ENCODE measurements at regions of chr9 and their contacts with region 1.

Region 1: GRCh38 chr9:76704593-76705204 is 59.5 kb upstream of the PCA3 start:
- DNase-seq: peak in 4 of 5 donors; percentile 46 to 56 (median 50)
- H3K4me3 ChIP-seq: no peak overlapping the region
- H3K4me3 Mint-ChIP-seq: no peak overlapping the region
- H3K27ac ChIP-seq: no peak overlapping the region
- H3K27ac Mint-ChIP-seq: no peak overlapping the region
- H3K4me1 ChIP-seq: no peaks in the 10 kb centered on the region
- H3K4me1 Mint-ChIP-seq: peaks cover 0 to 6% (median 3%) of the 10 kb centered on the region in 4 donors
- H3K27me3 ChIP-seq: no peaks in the 10 kb centered on the region
- H3K27me3 Mint-ChIP-seq: peaks cover 10 to 29% of the 10 kb centered on the region in 2 donors

Region 2: DNA sequence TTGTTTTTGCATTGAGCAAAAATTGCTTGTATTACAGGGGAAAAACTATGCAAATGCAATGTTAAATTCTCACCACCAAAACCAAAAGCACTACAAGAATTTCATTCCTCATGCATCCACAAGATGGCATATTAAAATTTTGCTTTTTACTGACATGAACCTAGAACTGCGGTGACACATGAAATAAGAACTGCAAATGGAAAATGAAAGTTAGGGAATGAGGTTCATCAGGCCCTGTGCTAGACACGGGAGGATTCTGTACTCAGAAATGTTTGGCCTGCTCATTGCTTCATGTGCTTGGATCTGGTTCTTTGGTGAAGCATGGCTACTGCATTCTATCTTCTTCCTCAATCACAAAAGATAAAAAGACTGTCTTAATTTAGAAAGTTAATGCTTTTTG is 301.3 kb before region 1 on chr9:
- CTCF ChIA-PET with region 1: interaction called, 19 read pairs
- POLR2A ChIA-PET with region 1: no interaction called
- intact Hi-C with region 1: loop called (anchors 1 kb)
- DNase-seq: peak; percentile 43 to 67 (median 60)
- H3K4me3 ChIP-seq: no peak overlapping the region
- H3K4me3 Mint-ChIP-seq: peak overlapping the region; percentile 37 to 79 (median 76)
- H3K27ac ChIP-seq: peak overlapping the region; percentile 33
- H3K27ac Mint-ChIP-seq: peak overlapping the region; percentile 72 to 93 (median 89)
- H3K4me1 ChIP-seq: peaks cover 7% of the 10 kb centered on the region
- H3K4me1 Mint-ChIP-seq: peaks cover 10 to 18% (median 12%) of the 10 kb centered on the region in 4 donors
- H3K27me3 ChIP-seq: no peaks in the 10 kb centered on the region
- H3K27me3 Mint-ChIP-seq: no peaks in the 10 kb centered on the region

Region 3: DNA sequence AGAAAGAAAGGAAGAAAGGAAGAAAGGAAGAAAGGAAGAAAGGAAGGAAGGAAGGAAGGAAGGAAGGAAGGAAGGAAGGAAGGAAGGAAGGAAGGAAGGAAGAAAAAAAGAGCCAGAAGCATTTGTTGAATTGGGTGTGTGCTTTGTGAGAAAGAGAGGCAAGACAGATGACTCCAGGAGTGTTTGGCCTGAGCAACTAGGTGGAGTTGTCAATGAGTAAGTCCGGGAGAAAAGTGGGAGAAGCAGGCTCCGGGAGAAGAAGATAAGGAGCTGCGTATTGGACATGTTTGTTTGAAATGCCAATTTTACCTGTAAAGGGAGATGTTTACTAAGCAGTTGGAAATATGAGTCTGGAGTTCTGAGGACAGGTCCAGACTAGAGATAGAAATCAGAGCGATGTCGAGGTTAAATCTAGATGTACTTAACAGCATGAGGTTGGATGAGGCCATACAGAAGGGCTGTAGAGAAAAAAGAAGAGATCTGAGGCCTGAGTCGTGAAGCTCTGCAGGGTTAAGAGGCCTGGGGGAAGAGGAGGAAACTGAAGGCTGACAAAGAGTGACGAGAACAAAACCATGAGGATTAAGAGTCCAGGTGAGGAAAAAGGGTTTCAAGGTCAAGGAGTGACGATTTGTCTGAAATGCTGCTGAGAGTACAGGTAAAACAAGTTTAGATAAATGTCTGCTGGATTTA is 260.7 kb before region 1 on chr9:
- CTCF ChIA-PET with region 1: interaction called, 71 read pairs
- POLR2A ChIA-PET with region 1: no interaction called
- intact Hi-C with region 1: no loop called
- DNase-seq: no peak
- H3K4me3 ChIP-seq: no peak overlapping the region
- H3K4me3 Mint-ChIP-seq: peak overlapping the region in 2 of 8 donors; percentile 21 to 36
- H3K27ac ChIP-seq: no peak overlapping the region
- H3K27ac Mint-ChIP-seq: peak overlapping the region in 2 of 7 donors; percentile 3 to 85
- H3K4me1 ChIP-seq: peaks cover 15% of the 10 kb centered on the region
- H3K4me1 Mint-ChIP-seq: peaks cover 0 to 14% (median 9%) of the 10 kb centered on the region in 4 donors
- H3K27me3 ChIP-seq: no peaks in the 10 kb centered on the region
- H3K27me3 Mint-ChIP-seq: no peaks in the 10 kb centered on the region

Region 4: DNA sequence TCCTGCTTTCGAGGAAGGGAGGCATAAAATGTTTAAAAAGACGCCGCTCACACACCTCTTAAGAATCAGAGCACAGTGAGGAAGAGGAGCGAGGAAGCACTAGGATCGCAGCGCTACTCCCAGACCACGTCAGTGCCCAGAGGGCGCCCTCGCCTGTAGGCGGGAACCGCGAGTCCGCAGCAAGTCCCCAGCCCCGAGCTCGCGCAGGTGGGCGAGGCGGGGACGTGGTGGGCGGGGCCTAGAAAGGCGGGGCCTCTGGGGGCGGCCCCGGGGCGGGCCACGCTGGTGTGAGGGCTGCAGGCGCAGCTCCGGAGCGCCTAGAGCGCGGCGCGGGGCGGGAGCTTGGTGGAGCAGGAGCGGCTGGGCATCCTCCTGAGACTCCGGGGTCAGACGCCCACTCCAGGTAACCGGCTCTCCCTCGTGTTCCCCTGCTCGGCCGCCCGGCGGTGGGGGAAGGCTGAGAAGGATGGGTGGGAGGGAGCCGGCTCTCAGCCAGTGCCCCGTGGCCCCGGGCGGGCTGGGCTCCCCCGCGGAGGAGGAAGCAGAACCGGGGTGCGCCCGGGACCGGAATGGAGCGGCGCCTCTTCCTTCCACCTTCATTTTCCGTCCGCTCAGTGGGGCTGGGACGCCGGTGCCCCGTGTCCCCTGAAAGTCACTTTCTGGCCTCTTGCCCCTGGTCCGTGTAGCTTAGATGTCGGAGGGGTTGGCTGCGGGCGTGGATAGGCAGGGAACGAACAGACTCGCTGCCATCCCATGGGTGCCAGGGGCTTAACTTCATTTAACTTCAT is 245.6 kb before region 1 on chr9 and contains the start of gene GCNT1:
- CTCF ChIA-PET with region 1: interaction called, 10 read pairs
- POLR2A ChIA-PET with region 1: no interaction called
- intact Hi-C with region 1: no loop called
- DNase-seq: peak; percentile 83 to 90 (median 87)
- H3K4me3 ChIP-seq: peak within 1 kb of the TSS; percentile 73 to 92
- H3K4me3 Mint-ChIP-seq: peak within 1 kb of the TSS; percentile 85 to 97 (median 94)
- H3K27ac ChIP-seq: peak within 1 kb of the TSS; percentile 28
- H3K27ac Mint-ChIP-seq: peak within 1 kb of the TSS; percentile 58 to 89 (median 83)
- H3K4me1 ChIP-seq: peaks cover 26% of the 10 kb centered on the region
- H3K4me1 Mint-ChIP-seq: peaks cover 18 to 27% (median 22%) of the 10 kb centered on the region in 4 donors
- H3K27me3 ChIP-seq: no peaks in the 10 kb centered on the region
- H3K27me3 Mint-ChIP-seq: no peaks in the 10 kb centered on the region
- total RNA-seq, gene GCNT1: 3.4 to 5.8 TPM

Region 5: GRCh38 chr9:76691517-76692313 is 13.0 kb before region 1 on chr9:
- CTCF ChIA-PET with region 1: interaction called, 25 read pairs
- POLR2A ChIA-PET with region 1: no interaction called
- intact Hi-C with region 1: no loop called
- DNase-seq: peak in 1 of 5 donors; percentile 2
- H3K4me3 ChIP-seq: no peak overlapping the region
- H3K4me3 Mint-ChIP-seq: peak overlapping the region; percentile 74 to 87 (median 82)
- H3K27ac ChIP-seq: no peak overlapping the region
- H3K27ac Mint-ChIP-seq: peak overlapping the region in 1 of 7 donors; percentile 69
- H3K4me1 ChIP-seq: no peaks in the 10 kb centered on the region
- H3K4me1 Mint-ChIP-seq: peaks cover 6 to 13% (median 8%) of the 10 kb centered on the region in 4 donors
- H3K27me3 ChIP-seq: no peaks in the 10 kb centered on the region
- H3K27me3 Mint-ChIP-seq: peaks cover 24 to 33% of the 10 kb centered on the region in 2 donors

Region 6: DNA sequence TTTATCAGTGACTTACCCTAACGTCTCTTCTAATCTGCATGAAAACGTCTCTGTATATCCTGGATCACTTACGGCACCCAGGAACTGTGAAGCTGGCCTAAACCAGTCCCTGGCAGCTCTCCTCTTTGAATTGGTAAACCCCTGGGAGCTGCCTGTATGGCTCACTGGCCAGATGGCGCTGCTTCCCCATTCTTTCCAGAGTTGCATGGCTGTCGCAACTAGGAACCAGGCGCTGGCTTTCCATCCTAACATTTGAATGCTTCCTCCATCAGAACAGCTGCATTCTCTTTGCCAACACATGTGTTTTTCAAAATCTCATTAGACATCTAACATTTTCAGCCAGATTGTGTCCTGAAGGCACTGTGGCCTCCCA is 51.6 kb after region 1 on chr9:
- CTCF ChIA-PET with region 1: no interaction called
- POLR2A ChIA-PET with region 1: no interaction called
- intact Hi-C with region 1: no loop called
- DNase-seq: no peak
- H3K4me3 ChIP-seq: no peak overlapping the region
- H3K4me3 Mint-ChIP-seq: no peak overlapping the region
- H3K27ac ChIP-seq: no peak overlapping the region
- H3K27ac Mint-ChIP-seq: no peak overlapping the region
- H3K4me1 ChIP-seq: no peaks in the 10 kb centered on the region
- H3K4me1 Mint-ChIP-seq: peaks cover 0 to 9% (median 4%) of the 10 kb centered on the region in 4 donors
- H3K27me3 ChIP-seq: no peaks in the 10 kb centered on the region
- H3K27me3 Mint-ChIP-seq: peaks cover 2 to 5% of the 10 kb centered on the region in 2 donors